IMR-90 (cell line): ENCODE measurements at regions of chr10 and their contacts with region 1.

Region 1: GRCh38 chr10:102540023-102540422 is 36.3 kb downstream of the SUFU start:
- DNase-seq: peak; percentile 30
- ATAC-seq: peak; percentile 76
- H3K4me3 ChIP-seq: no peak overlapping the region
- H3K27ac ChIP-seq: no peak overlapping the region
- H3K4me1 ChIP-seq: peaks cover 2% of the 10 kb centered on the region; the same call in 1 of the 2 replicates
- H3K27me3 ChIP-seq: no peaks in the 10 kb centered on the region
- CTCF ChIP-seq: peak; percentile 39
- POLR2A ChIP-seq: no peak
- RAD21 ChIP-seq: peak; percentile 31; the same call in 1 of the 2 replicates

Region 2: DNA sequence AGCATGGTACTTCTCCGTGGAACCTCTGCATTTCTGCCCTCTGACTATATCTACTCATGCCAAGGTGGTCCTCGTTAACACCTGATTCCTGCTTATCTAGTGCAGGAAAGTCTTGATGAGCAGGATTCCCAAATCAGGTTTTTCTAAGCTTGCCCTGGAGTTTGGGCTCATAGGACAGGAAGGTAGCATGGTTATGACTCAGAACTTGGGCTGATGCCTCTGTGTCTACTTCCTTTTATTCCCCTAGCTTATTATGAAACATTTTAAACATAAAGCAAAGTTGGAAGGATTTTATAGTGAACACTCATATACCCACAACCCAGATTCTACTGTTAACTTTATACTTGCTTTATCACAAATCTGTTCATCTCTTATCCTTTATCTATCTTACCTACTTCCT is 30.6 kb before region 1 on chr10:
- CTCF ChIA-PET with region 1: no interaction called
- POLR2A ChIA-PET with region 1: no interaction called
- dilution Hi-C with region 1: no loop called
- in situ Hi-C with region 1: no loop called
- intact Hi-C with region 1: loop called (anchors 5 kb)
- DNase-seq: peak; percentile 80
- ATAC-seq: peak; percentile 77
- H3K4me3 ChIP-seq: no peak overlapping the region
- H3K27ac ChIP-seq: no peak overlapping the region
- H3K4me1 ChIP-seq: peaks cover 11% of the 10 kb centered on the region
- H3K27me3 ChIP-seq: no peaks in the 10 kb centered on the region
- CTCF ChIP-seq: no peak
- POLR2A ChIP-seq: no peak
- RAD21 ChIP-seq: no peak